Activated CD4-positive, alpha-beta T cell treated with anti-CD3 and anti-CD28 coated beads, Interleukin-2, amount 10 ng/mL, durations not matched to agents 24 days and 14 days (primary cell): ENCODE measurements at regions of chr14 and their contacts with region 1.

Region 1: GRCh38 chr14:102362545-102363181 is at the starts of genes CINP and TECPR2:
- DNase-seq: peak; percentile 98
- H3K4me3 Mint-ChIP-seq: no peak within 1 kb of the TSS
- H3K27ac Mint-ChIP-seq: peak within 1 kb of the TSS; percentile 92
- H3K4me1 Mint-ChIP-seq: peaks cover 27% of the 10 kb centered on the region
- H3K27me3 Mint-ChIP-seq: peaks cover 2% of the 10 kb centered on the region
- total RNA-seq, gene CINP: 43.7 and 46.2 TPM in 2 replicates
- total RNA-seq, gene TECPR2: 6.4 and 7.4 TPM in 2 replicates

Region 2: GRCh38 chr14:102516531-102517415 is 154.1 kb after region 1 on chr14:
- intact Hi-C with region 1: loop called (anchors 2 kb)
- DNase-seq: peak; percentile 93
- H3K4me3 Mint-ChIP-seq: peak overlapping the region; percentile 82
- H3K27ac Mint-ChIP-seq: peak overlapping the region; percentile 68
- H3K4me1 Mint-ChIP-seq: peaks cover 4% of the 10 kb centered on the region
- H3K27me3 Mint-ChIP-seq: peaks cover 10% of the 10 kb centered on the region

Region 3: GRCh38 chr14:102524466-102525218 is 162.0 kb after region 1 on chr14:
- intact Hi-C with region 1: loop called (anchors 2 kb)
- DNase-seq: peak; percentile 99
- H3K4me3 Mint-ChIP-seq: peak overlapping the region; percentile 94
- H3K27ac Mint-ChIP-seq: peak overlapping the region; percentile 93
- H3K4me1 Mint-ChIP-seq: peaks cover 26% of the 10 kb centered on the region
- H3K27me3 Mint-ChIP-seq: no peaks in the 10 kb centered on the region

Region 4: GRCh38 chr14:102591889-102592763 is 229.5 kb after region 1 on chr14 and contains the start of gene RCOR1:
- intact Hi-C with region 1: loop called (anchors 1 kb)
- DNase-seq: peak; percentile 99
- H3K4me3 Mint-ChIP-seq: peak within 1 kb of the TSS; percentile 94
- H3K27ac Mint-ChIP-seq: peak within 1 kb of the TSS; percentile 95
- H3K4me1 Mint-ChIP-seq: peaks cover 23% of the 10 kb centered on the region
- H3K27me3 Mint-ChIP-seq: peaks cover 4% of the 10 kb centered on the region
- total RNA-seq, gene RCOR1: 21.8 and 24.0 TPM in 2 replicates